ENCODE measurements at regions of chrX and their contacts with region 1.

Region 1: DNA sequence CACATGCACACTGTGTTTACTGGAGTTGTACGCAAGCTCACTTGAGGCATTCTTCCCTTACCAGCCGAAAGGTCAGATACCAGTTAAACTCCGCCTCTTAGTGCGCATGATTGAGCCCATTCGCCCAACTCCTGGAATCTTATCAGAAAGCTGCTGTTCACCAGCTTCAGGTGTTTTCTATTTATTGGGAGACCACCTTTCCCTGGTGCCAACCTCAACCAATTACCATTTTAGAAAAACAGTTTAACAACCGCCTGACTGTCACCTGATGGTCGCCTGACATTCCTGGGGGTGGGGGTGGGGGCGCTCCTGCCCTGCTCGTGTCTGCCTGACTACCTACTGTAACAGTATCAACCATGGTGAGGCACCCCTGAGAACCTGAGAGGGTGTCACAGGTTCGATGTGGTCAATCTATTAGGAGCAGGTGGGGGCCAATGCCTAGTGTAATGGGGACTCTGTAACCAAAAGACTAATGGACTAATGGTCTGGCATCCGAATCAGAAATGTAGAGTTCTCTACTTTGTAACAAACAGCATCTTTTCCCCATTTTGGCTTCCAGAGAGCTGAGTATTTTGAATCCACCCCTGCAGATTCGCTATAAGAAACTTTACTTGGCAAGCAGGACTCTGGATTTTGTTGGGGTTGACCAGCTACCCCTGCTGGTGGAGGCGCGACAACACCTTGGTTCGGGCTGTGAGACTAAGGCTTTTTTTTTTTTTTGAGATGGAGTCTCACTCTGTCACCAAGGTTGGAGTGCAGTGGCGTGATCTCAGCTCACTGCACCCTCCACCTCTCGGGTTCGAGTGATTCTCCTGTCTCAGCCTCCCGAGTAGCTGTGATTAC is 58.2 kb upstream of the ZNF157 start:
- DNase-seq: no peak
- ATAC-seq: peak; percentile 28
- H3K4me3 Mint-ChIP-seq: no peak overlapping the region
- H3K27ac Mint-ChIP-seq: no peak overlapping the region
- H3K4me1 Mint-ChIP-seq: no peaks in the 10 kb centered on the region
- H3K27me3 Mint-ChIP-seq: no peaks in the 10 kb centered on the region
- CTCF ChIP-seq: no peak

Region 2: GRCh38 chrX:47384502-47384901 is 72.3 kb after region 1 on chrX:
- CTCF ChIA-PET with region 1: no interaction called
- POLR2A ChIA-PET with region 1: no interaction called
- intact Hi-C with region 1: loop called (anchors 1 kb)
- DNase-seq: no peak
- ATAC-seq: peak; percentile 72
- H3K4me3 Mint-ChIP-seq: no peak overlapping the region
- H3K27ac Mint-ChIP-seq: no peak overlapping the region
- H3K4me1 Mint-ChIP-seq: peaks cover 7% of the 10 kb centered on the region
- H3K27me3 Mint-ChIP-seq: no peaks in the 10 kb centered on the region
- CTCF ChIP-seq: peak; percentile 33